Dendritic cell treated with granulocyte-macrophage colony-stimulating factor and Interleukin-4, amounts not matched to agents 40 ng/mL and 50 ng/mL, for 4 days (primary cell): ENCODE measurements at regions of chr5 and their contacts with region 1.

Region 1: GRCh38 chr5:41843456-41844370 is 26.5 kb downstream of the OXCT1 start:
- H3K4me3 Mint-ChIP-seq: no peak overlapping the region
- H3K27ac Mint-ChIP-seq: no peak overlapping the region
- H3K4me1 Mint-ChIP-seq: no peaks in the 10 kb centered on the region
- H3K27me3 Mint-ChIP-seq: no peaks in the 10 kb centered on the region

Region 2: DNA sequence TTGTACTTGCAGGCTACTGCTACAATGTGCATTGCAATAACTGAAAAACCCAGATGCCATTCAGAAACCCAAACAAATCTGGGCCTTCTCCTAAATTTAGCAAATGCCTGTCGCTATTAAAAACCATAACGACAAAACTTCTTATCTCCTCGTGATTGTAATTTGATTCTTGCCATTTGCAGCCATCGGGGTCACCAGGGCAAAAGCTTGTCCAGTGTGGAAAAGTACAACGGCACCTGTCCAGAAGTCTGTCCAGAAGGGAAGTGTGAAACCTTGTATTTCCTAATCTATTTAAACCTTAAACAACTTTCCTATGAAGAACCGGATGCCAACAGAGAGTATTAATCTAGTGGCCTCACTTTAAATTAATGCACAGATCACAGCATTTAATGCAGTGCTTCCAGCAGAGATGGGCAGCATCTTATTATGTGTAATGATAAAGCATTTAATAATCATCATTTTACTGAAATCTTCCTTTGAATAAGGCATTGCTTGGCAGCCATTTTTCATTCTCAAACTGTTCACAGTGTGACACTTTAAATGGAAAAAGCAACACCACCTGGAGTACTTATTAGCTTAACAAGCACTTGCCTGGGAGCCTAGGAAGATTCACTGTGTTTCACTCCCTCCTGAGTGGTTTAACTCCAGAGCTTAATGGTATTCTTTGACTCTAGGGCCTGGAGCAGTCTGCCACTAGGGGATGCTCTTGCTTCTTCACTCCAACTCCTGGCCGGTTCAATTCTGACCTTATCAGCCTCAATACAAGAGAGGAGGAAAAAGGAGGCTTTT is 939.3 kb before region 1 on chr5:
- intact Hi-C with region 1: loop called (anchors 5 kb)
- H3K4me3 Mint-ChIP-seq: no peak overlapping the region
- H3K27ac Mint-ChIP-seq: no peak overlapping the region
- H3K4me1 Mint-ChIP-seq: no peaks in the 10 kb centered on the region
- H3K27me3 Mint-ChIP-seq: peaks cover 9% of the 10 kb centered on the region